GM18951 (cell line): ENCODE measurements at regions of chr1 and their contacts with region 1.

Region 1: DNA sequence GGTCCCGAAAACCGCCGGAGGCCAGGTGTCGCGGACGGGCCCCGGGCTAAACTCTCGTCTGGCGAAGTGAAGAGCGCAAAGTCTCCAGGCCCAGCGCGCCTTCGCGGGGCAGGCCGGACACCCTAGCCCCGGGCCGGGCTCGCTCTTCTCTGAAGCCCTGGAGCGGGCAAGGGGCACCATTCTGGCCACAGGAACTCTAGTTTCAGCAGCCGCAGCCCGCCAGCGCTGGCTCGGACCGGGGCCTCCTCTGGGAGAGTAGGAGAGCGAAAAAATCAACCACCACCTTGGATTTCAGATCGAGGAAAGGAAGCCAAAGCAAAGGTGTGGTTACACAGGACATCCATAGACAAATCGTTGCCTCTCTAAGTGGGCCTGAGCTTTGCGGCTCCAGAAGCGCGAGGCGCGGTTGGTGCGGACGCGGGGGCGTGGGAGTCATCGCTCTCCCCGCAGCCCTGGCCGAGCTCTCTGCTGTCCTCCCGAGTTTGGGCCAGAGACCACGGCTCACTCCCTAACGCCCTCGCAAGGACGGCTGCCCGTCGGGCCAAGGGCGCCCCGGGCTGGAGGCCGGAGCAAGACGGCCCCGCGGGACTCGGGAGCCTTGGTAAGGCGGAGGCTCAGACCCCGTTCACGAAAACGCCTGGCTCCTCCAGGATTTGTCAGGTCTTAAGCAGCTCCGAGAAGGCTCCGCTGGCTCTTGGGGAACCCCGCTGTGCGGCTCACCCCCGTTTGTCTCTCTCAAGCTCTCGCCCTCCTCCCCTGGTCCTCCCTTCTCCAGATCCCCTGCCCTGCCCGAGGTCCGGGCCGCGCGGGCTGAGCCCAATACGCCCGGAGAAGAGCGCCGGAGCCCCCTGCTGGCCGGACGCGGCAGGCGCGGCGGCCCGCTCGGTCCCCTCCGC is 132.9 kb upstream of the DPYD start:
- POLR2A ChIP-seq: no peak

Region 2: GRCh38 chr1:96973605-96974004 is 1080.1 kb before region 1 on chr1:
- in situ Hi-C with region 1: loop called (anchors 10 kb)
- POLR2A ChIP-seq: no peak

Region 3: DNA sequence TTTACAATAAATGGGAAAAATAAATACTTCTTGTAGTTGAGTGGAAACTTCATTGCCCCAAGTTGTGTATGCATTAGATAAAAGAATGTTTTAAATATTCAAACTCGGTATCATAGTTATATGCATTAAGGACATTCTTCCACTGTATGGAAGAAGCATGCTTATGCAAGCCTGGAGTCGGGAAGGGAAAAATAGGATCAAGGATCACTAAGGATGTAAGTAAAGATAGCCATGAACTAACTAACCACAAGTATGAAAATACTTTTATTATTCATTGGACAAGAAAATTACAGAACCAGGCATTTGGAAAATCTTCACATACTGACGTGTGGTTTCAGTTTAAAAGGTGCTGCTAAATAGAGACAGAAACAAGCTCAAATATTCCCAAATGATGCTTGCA is 106.0 kb before region 1 on chr1:
- in situ Hi-C with region 1: no loop called
- POLR2A ChIP-seq: no peak

Region 4: GRCh38 chr1:98468111-98468717 is 414.5 kb after region 1 on chr1:
- in situ Hi-C with region 1: loop called (anchors 25 kb)
- POLR2A ChIP-seq: no peak